Dendritic cell treated with granulocyte-macrophage colony-stimulating factor and Interleukin-4, amounts not matched to agents 40 ng/mL and 50 ng/mL, for 4 days (primary cell): ENCODE measurements at regions of chr17 and their contacts with region 1.

Region 1: GRCh38 chr17:80147035-80147836 is at the start of gene EIF4A3:
- H3K4me3 Mint-ChIP-seq: peak within 1 kb of the TSS; percentile 89
- H3K27ac Mint-ChIP-seq: peak within 1 kb of the TSS; percentile 62
- H3K4me1 Mint-ChIP-seq: peaks cover 32% of the 10 kb centered on the region
- H3K27me3 Mint-ChIP-seq: no peaks in the 10 kb centered on the region

Region 2: DNA sequence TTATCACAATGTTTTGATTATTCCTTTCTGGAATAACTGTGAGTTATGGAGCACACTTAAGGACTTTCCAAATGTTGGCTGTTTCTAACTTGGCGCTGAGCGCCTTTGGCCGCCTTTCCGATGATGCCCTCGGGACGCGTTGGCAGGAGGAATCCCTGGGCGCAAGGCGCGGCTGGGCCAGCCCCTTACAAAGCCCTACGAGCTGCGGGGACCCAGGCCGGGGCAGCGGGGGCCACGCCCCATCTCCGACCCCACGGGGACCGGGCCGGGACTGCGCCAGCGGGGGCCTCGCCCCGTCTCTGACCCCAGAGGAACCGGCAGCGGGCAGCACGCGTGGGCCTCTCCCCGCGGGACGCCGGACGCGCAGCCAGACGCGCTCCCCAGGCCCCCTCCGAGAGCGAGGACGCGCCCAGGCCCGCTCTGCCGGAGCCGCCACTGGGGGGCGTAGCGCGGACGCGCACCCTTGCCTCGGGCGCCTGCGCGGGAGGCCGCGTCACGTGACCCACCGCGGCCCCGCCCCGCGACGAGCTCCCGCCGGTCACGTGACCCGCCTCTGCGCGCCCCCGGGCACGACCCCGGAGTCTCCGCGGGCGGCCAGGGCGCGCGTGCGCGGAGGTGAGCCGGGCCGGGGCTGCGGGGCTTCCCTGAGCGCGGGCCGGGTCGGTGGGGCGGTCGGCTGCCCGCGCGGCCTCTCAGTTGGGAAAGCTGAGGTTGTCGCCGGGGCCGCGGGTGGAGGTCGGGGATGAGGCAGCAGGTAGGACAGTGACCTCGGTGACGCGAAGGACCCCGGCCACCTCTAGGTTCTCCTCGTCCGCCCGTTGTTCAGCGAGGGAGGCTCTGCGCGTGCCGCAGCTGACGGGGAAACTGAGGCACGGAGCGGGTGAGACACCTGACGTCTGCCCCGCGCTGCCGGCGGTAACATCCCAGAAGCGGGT is 46.0 kb before region 1 on chr17 and contains the start of gene GAA:
- intact Hi-C with region 1: loop called (anchors 5 kb)
- H3K4me3 Mint-ChIP-seq: peak within 1 kb of the TSS; percentile 91
- H3K27ac Mint-ChIP-seq: peak within 1 kb of the TSS; percentile 95
- H3K4me1 Mint-ChIP-seq: peaks cover 66% of the 10 kb centered on the region
- H3K27me3 Mint-ChIP-seq: peaks cover 3% of the 10 kb centered on the region

Region 3: GRCh38 chr17:80263253-80264204 is 116.3 kb after region 1 on chr17:
- intact Hi-C with region 1: loop called (anchors 5 kb)
- H3K4me3 Mint-ChIP-seq: peak overlapping the region; percentile 98
- H3K27ac Mint-ChIP-seq: peak overlapping the region; percentile 90
- H3K4me1 Mint-ChIP-seq: peaks cover 66% of the 10 kb centered on the region
- H3K27me3 Mint-ChIP-seq: no peaks in the 10 kb centered on the region